B cell (primary cell): ENCODE measurements at regions of chr11 and their contacts with region 1.

Region 1: GRCh38 chr11:103108933-103109817 is at the start of gene DYNC2H1:
- DNase-seq: peak; percentile 93
- ATAC-seq: peak; percentile 94
- H3K4me3 ChIP-seq: peak within 1 kb of the TSS; percentile 67 to 87 (median 80)
- H3K4me3 Mint-ChIP-seq: peak within 1 kb of the TSS; percentile 98
- H3K27ac ChIP-seq: peak within 1 kb of the TSS; percentile 26 to 67
- H3K27ac Mint-ChIP-seq: peak within 1 kb of the TSS; percentile 92
- H3K4me1 ChIP-seq: peaks cover 12 to 17% of the 10 kb centered on the region in 2 donors
- H3K4me1 Mint-ChIP-seq: peaks cover 14% of the 10 kb centered on the region
- H3K27me3 ChIP-seq: peaks cover 0 to 8% (median 4%) of the 10 kb centered on the region in 4 experiments
- H3K27me3 Mint-ChIP-seq: peaks cover 5% of the 10 kb centered on the region
- CTCF ChIP-seq: peak; percentile 65
- total RNA-seq, gene DYNC2H1: 7.1 and 7.8 TPM in 2 replicates

Region 2: DNA sequence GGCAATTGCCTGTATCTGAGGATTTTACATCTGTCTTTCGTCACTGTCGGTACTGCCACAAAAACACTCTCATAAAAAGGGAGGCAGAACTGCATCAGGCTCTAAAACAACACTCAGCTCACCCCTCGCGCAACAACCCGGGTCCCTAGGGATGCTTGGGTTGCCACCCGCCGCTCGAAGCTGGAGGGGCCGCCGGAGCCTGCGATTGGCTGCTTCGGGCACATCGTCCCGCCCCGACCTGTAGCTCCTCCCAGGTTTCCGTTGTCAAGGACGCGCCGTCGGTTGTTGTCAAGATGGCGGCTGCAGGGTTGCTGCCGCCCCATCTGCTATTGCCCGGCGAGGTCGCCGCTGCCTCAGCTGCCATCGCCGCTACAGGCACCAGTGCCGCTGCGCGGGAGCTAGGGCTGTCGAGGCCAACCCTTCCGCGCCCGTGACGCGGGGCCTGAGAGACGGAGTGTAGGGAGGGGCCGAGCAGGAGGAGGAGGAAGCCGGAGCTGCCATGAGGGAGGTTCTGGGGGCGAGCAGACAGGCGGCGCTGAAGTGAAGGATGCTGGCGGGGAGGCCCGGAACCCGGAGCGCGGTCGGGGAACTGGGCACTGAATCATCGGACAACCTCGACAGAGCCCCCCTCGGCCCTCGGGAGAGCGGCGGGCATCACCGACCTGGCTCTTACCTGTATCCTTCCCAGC is 1194.3 kb before region 1 on chr11 and contains the start of gene CEP126:
- CTCF ChIA-PET with region 1: no interaction called
- POLR2A ChIA-PET with region 1: no interaction called
- intact Hi-C with region 1: loop called (anchors 1 kb)
- DNase-seq: peak; percentile 98
- ATAC-seq: peak; percentile 90
- H3K4me3 ChIP-seq: peak within 1 kb of the TSS; percentile 53 to 88 (median 81)
- H3K4me3 Mint-ChIP-seq: peak within 1 kb of the TSS; percentile 96
- H3K27ac ChIP-seq: peak within 1 kb of the TSS; percentile 92 to 99
- H3K27ac Mint-ChIP-seq: peak within 1 kb of the TSS; percentile 97
- H3K4me1 ChIP-seq: peaks cover 18 to 21% of the 10 kb centered on the region in 2 donors
- H3K4me1 Mint-ChIP-seq: peaks cover 23% of the 10 kb centered on the region
- H3K27me3 ChIP-seq: no peaks in the 10 kb centered on the region
- H3K27me3 Mint-ChIP-seq: peaks cover 11% of the 10 kb centered on the region
- CTCF ChIP-seq: peak; percentile 23
- total RNA-seq, gene CEP126: 9.1 and 9.4 TPM in 2 replicates

Region 3: DNA sequence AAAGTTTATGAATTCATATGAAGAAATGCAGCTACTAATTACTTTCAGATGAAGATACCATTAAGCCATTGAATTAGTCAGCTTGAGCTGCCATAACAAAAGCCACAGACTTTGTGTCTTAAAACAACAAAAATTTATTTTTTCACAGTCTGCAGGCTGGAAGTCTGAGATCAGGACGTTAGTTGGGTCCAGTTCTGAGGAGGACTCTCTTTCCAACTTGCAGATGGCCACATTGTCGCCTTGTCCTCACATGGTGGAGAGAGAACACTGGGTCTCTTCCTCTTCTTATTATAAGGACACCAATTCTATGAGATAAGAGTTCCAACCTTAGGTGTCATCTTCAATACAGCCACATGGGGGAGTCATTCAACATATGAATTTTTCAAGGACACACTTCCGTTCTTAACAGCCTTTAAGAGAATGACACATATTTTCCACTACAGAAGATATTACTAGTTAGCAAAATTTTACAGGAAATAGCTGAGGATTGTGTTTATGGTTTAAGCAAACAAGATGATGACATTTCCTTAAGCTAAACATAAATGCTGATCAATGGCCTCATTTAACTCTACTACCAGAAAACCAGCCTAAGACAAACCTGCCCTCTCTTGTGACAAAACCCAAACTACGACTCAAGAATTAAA is 73.3 kb before region 1 on chr11:
- CTCF ChIA-PET with region 1: interaction called, 4 read pairs
- POLR2A ChIA-PET with region 1: no interaction called
- intact Hi-C with region 1: loop called (anchors 1 kb)
- DNase-seq: peak; percentile 67
- ATAC-seq: peak; percentile 88
- H3K4me3 ChIP-seq: no peak overlapping the region
- H3K4me3 Mint-ChIP-seq: no peak overlapping the region
- H3K27ac ChIP-seq: no peak overlapping the region
- H3K27ac Mint-ChIP-seq: peak overlapping the region; percentile 23
- H3K4me1 ChIP-seq: peaks cover 0 to 3% of the 10 kb centered on the region in 2 donors
- H3K4me1 Mint-ChIP-seq: peaks cover 5% of the 10 kb centered on the region
- H3K27me3 ChIP-seq: no peaks in the 10 kb centered on the region
- H3K27me3 Mint-ChIP-seq: no peaks in the 10 kb centered on the region
- CTCF ChIP-seq: peak; percentile 79

Region 4: GRCh38 chr11:103091801-103092524 is 17.2 kb before region 1 on chr11 and contains the start of gene DCUN1D5:
- CTCF ChIA-PET with region 1: interaction called, 25 read pairs
- POLR2A ChIA-PET with region 1: interaction called, 14 read pairs
- intact Hi-C with region 1: loop called (anchors 1 kb)
- DNase-seq: peak; percentile 95
- ATAC-seq: peak; percentile 99
- H3K4me3 ChIP-seq: peak within 1 kb of the TSS; percentile 79 to 96 (median 92)
- H3K4me3 Mint-ChIP-seq: peak within 1 kb of the TSS; percentile 92
- H3K27ac ChIP-seq: peak within 1 kb of the TSS; percentile 82 to 89
- H3K27ac Mint-ChIP-seq: peak within 1 kb of the TSS; percentile 88
- H3K4me1 ChIP-seq: peaks cover 14 to 15% of the 10 kb centered on the region in 2 donors
- H3K4me1 Mint-ChIP-seq: peaks cover 26% of the 10 kb centered on the region
- H3K27me3 ChIP-seq: peaks cover 0 to 27% (median 15%) of the 10 kb centered on the region in 4 experiments
- H3K27me3 Mint-ChIP-seq: peaks cover 38% of the 10 kb centered on the region
- CTCF ChIP-seq: no peak
- total RNA-seq, gene DCUN1D5: 13.1 and 14.2 TPM in 2 replicates